GM12878 (cell line): ENCODE measurements at regions of chr3 and their contacts with region 1.

Region 1: DNA sequence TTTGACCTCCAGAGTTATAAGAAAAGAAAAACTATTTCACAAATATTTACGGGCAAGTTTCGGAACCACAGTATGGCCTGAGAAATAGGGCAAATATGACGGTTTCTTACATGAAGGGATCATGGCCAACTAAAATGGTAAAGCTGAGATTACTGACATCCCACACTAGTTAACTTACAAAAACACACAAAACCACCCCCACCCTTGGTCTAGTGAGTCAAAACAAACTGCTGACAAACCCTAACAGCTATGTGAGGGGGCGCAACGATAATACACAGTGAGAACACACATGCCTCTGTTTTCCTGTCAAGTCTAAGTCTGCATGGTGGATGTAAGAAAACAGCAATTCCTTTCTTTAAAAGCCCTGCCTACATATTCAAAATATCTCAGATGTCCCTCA is 32.3 kb downstream of the CBLB start:
- DNase-seq: peak; percentile 68
- ATAC-seq: peak; percentile 81
- H3K4me3 ChIP-seq: peak overlapping the region; percentile 33; the same call in 1 of the 2 replicates
- H3K27ac ChIP-seq: peak overlapping the region; percentile 86
- H3K4me1 ChIP-seq: peaks cover 27% of the 10 kb centered on the region
- H3K27me3 ChIP-seq: no peaks in the 10 kb centered on the region
- CTCF ChIP-seq: 0 out of 6 replicates have a peak, but pooled peaks of 1 of the 3 experiments have one; percentile 5
- EP300 ChIP-seq: peak; percentile 80 to 86; a peak in 3 of 4 replicates
- POLR2A ChIP-seq: peak; percentile 31; the same call in 1 of the 2 replicates
- RAD21 ChIP-seq: peak; percentile 27

Region 2: DNA sequence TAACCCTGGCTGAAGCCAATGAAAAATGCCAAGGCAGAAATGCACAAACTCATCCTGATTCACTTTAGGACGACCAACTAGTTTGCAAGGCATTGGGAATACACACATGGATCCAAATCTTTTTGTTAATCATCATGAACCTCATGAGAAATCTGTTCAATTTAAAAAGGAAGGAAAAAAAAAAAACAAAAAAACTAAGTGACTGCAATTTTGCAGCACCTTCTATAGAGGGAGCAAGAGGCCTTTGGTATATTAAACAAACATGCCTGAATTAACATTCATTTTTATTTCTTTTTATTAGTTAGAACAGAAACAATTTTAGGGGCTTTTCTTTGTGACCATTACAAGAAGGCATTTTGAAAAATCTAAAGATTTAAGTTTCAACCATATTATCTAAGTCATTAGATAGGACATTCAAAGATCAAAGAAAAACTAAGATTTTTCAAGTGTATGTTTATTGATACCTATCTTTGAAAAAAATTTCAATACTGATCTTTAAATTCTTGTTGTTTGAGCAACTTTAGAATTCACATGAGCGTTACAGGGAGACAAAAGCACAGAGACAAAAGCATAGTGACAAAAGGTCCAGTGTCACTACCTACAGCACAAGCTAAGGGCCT is 150.1 kb before region 1 on chr3:
- CTCF ChIA-PET with region 1: interaction called, 7 read pairs
- POLR2A ChIA-PET with region 1: no interaction called
- RAD21 ChIA-PET with region 1: interaction called, 12 read pairs
- SMC1A ChIA-PET with region 1: interaction called, 9 read pairs
- in situ Hi-C with region 1: no loop called
- intact Hi-C with region 1: loop called (anchors 5 kb)
- DNase-seq: no peak
- ATAC-seq: peak; percentile 46
- H3K4me3 ChIP-seq: no peak overlapping the region
- H3K27ac ChIP-seq: no peak overlapping the region
- H3K4me1 ChIP-seq: no peaks in the 10 kb centered on the region
- H3K27me3 ChIP-seq: no peaks in the 10 kb centered on the region
- CTCF ChIP-seq: peak; percentile 57 to 69 (median 65)
- EP300 ChIP-seq: no peak
- POLR2A ChIP-seq: no peak
- RAD21 ChIP-seq: peak; percentile 83

Region 3: GRCh38 chr3:105798381-105798934 is 38.1 kb before region 1 on chr3:
- CTCF ChIA-PET with region 1: interaction called, 12 read pairs
- POLR2A ChIA-PET with region 1: interaction called, 18 read pairs
- RAD21 ChIA-PET with region 1: interaction called, 62 read pairs
- SMC1A ChIA-PET with region 1: interaction called, 86 read pairs
- in situ Hi-C with region 1: no loop called
- intact Hi-C with region 1: loop called (anchors 2 kb)
- DNase-seq: peak; percentile 51
- ATAC-seq: peak; percentile 73
- H3K4me3 ChIP-seq: no peak overlapping the region
- H3K27ac ChIP-seq: peak overlapping the region; percentile 61
- H3K4me1 ChIP-seq: peaks cover 37% of the 10 kb centered on the region
- H3K27me3 ChIP-seq: no peaks in the 10 kb centered on the region
- CTCF ChIP-seq: no peak
- EP300 ChIP-seq: peak; percentile 64 to 73; a peak in 3 of 4 replicates
- POLR2A ChIP-seq: no peak
- RAD21 ChIP-seq: peak; percentile 16; the same call in 1 of the 2 replicates

Region 4: DNA sequence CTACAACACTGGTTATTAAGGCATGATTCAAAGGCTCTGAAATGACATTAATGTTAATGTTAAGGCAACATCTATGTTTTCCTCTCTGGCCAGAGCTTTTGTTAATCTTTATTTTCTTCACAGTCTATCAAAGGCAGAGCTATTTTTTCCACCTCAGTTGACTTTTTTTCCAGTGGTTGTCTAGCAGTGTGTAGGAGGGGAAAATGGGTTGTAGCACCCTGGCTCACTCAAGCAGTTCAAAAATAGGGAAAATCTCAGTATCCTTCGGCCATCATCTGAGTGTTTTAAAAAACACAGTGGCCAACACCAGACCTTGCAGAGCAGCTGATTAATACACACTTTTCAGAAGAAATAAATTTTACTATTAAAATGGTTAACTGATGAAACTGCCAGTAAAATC is 10.9 kb after region 1 on chr3:
- CTCF ChIA-PET with region 1: interaction called, 8 read pairs
- POLR2A ChIA-PET with region 1: interaction called, 6 read pairs
- RAD21 ChIA-PET with region 1: interaction called, 31 read pairs
- SMC1A ChIA-PET with region 1: interaction called, 29 read pairs
- in situ Hi-C with region 1: no loop called
- intact Hi-C with region 1: no loop called
- DNase-seq: no peak
- ATAC-seq: peak; percentile 10; the same call in 1 of the 3 replicates
- H3K4me3 ChIP-seq: no peak overlapping the region
- H3K27ac ChIP-seq: no peak overlapping the region
- H3K4me1 ChIP-seq: no peaks in the 10 kb centered on the region
- H3K27me3 ChIP-seq: no peaks in the 10 kb centered on the region
- CTCF ChIP-seq: no peak
- EP300 ChIP-seq: no peak
- POLR2A ChIP-seq: no peak
- RAD21 ChIP-seq: no peak

Region 5: GRCh38 chr3:105876780-105877327 is 40.3 kb after region 1 on chr3:
- CTCF ChIA-PET with region 1: interaction called, 3 read pairs
- POLR2A ChIA-PET with region 1: no interaction called
- RAD21 ChIA-PET with region 1: interaction called, 11 read pairs
- SMC1A ChIA-PET with region 1: interaction called, 4 read pairs
- in situ Hi-C with region 1: no loop called
- intact Hi-C with region 1: no loop called
- DNase-seq: no peak
- ATAC-seq: peak; percentile 89
- H3K4me3 ChIP-seq: no peak overlapping the region
- H3K27ac ChIP-seq: no peak overlapping the region
- H3K4me1 ChIP-seq: peaks cover 4% of the 10 kb centered on the region
- H3K27me3 ChIP-seq: no peaks in the 10 kb centered on the region
- CTCF ChIP-seq: no peak
- EP300 ChIP-seq: no peak
- POLR2A ChIP-seq: no peak
- RAD21 ChIP-seq: no peak

Region 6: GRCh38 chr3:106183762-106184391 is 347.3 kb after region 1 on chr3:
- CTCF ChIA-PET with region 1: interaction called, 9 read pairs
- POLR2A ChIA-PET with region 1: no interaction called
- RAD21 ChIA-PET with region 1: interaction called, 66 read pairs
- SMC1A ChIA-PET with region 1: interaction called, 67 read pairs
- in situ Hi-C with region 1: no loop called
- intact Hi-C with region 1: loop called (anchors 2 kb)
- DNase-seq: peak; percentile 81
- ATAC-seq: peak; percentile 70
- H3K4me3 ChIP-seq: no peak overlapping the region
- H3K27ac ChIP-seq: peak overlapping the region; percentile 100
- H3K4me1 ChIP-seq: peaks cover 24% of the 10 kb centered on the region
- H3K27me3 ChIP-seq: no peaks in the 10 kb centered on the region
- CTCF ChIP-seq: no peak
- EP300 ChIP-seq: no peak
- POLR2A ChIP-seq: no peak
- RAD21 ChIP-seq: no peak

Region 7: DNA sequence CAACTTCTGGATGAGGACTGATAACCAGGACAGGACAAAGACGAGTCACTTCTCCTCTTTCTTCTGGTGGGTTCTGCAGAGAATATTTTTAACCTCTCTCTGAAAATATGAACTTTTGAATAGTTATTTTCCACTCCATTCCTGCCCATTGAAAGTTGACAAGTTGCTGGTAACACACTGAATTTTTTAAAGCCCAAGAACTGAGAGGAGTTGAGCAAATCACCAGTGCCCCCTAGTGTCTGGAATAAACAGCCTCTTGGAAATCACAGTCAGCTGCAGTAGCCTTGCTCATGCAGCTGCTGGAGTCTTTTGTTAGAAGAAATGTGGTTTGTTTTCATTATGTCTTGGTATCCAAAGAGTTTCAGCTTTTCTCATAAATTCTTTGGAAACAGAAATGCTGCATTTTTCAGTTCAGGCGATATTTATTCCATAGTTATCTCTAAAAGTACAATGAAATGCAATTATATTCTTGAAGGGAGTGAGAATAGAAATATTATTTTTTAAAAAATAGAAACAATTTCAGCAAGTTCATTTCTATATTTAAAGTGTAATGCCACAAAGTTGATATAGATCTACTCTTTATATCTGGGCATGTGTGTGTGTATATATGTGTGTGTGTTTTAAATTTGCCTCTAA is 773.3 kb after region 1 on chr3:
- CTCF ChIA-PET with region 1: interaction called, 7 read pairs
- POLR2A ChIA-PET with region 1: no interaction called
- RAD21 ChIA-PET with region 1: interaction called, 12 read pairs
- SMC1A ChIA-PET with region 1: interaction called, 11 read pairs
- in situ Hi-C with region 1: no loop called
- intact Hi-C with region 1: no loop called
- DNase-seq: peak; percentile 77
- ATAC-seq: peak; percentile 95
- H3K4me3 ChIP-seq: no peak overlapping the region
- H3K27ac ChIP-seq: peak overlapping the region; percentile 55
- H3K4me1 ChIP-seq: peaks cover 5% of the 10 kb centered on the region
- H3K27me3 ChIP-seq: no peaks in the 10 kb centered on the region
- CTCF ChIP-seq: peak; percentile 83 to 87 (median 86)
- EP300 ChIP-seq: no peak
- POLR2A ChIP-seq: no peak
- RAD21 ChIP-seq: peak; percentile 99